ENCODE measurements at regions of chr20 and their contacts with region 1.

Region 1: DNA sequence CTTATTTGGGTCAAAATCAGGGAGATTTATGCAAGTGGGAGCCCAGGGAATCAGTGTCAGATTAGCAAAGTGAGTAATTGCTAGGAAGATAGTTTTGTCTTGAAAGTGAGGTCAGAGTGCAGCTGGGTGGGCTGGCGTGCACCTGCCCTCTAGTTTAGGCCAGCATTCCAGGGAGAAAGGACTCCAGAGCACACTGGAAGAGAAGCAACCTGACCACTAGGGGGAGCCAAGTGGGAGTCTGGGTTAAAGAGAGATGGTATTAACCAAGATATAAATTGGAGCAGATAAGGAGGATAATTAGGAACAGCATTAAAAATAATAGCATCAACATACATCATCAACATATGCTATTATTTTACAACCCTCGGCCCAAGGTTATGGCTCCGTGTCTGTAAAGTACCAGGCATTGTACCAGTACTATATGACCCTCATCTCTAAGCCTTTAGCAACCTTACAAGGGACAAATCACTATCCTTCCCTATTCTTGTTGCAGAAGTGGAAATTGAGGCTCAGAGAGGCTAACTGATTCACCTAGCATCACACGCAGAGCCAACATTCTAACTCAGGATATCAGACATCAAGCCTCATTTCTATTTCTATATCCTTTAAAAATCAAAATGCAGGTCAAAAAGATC is 57.8 kb downstream of the SLC2A10 start:
- DNase-seq: peak; percentile 43
- H3K4me3 ChIP-seq: no peak overlapping the region
- H3K27ac ChIP-seq: no peak overlapping the region
- H3K4me1 ChIP-seq: peaks cover 0 to 12% of the 10 kb centered on the region in 2 experiments; a peak in 2 of 4 replicates
- H3K27me3 ChIP-seq: no peaks in the 10 kb centered on the region
- CTCF ChIP-seq: peak; percentile 69
- EP300 ChIP-seq: no peak
- RAD21 ChIP-seq: peak; percentile 35; the same call in 1 of the 2 replicates

Region 2: DNA sequence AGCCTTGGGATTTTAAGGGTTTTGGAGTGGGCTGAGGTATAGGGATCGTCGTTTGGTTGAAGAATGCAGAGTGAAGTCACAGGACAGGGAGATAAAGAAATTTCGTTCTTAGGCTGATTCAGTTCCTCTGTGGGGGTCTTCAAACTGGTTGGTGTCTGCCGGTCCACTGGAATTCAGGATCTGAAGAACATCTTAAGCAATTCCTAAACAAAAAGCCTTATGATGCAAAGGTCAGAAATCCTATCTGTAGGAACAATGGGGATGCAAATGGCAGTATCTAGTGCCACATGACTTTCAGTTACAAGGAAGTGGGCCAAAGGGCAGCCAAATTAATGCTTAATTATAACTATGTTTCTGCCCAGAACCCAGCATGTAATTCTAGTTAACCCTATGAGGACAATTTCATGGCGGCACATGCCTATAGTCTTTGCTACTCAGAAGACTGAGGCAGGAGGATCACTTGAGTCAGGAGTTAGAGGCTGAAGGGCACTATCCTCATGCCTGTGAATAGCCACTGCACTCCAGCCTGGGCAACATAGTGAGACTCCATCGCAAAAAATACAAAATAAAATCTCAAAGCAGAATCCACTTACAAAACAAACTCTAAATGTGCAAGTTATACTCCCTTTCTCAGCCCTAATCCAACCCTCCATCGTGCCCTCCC is 62.4 kb before region 1 on chr20:
- CTCF ChIA-PET with region 1: no interaction called
- POLR2A ChIA-PET with region 1: no interaction called
- DNase-seq: no peak
- H3K4me3 ChIP-seq: no peak overlapping the region
- H3K27ac ChIP-seq: no peak overlapping the region
- H3K4me1 ChIP-seq: peaks cover 0 to 3% of the 10 kb centered on the region in 2 experiments; a peak in 1 of 4 replicates
- H3K27me3 ChIP-seq: no peaks in the 10 kb centered on the region
- CTCF ChIP-seq: no peak
- EP300 ChIP-seq: no peak
- RAD21 ChIP-seq: no peak

Region 3: DNA sequence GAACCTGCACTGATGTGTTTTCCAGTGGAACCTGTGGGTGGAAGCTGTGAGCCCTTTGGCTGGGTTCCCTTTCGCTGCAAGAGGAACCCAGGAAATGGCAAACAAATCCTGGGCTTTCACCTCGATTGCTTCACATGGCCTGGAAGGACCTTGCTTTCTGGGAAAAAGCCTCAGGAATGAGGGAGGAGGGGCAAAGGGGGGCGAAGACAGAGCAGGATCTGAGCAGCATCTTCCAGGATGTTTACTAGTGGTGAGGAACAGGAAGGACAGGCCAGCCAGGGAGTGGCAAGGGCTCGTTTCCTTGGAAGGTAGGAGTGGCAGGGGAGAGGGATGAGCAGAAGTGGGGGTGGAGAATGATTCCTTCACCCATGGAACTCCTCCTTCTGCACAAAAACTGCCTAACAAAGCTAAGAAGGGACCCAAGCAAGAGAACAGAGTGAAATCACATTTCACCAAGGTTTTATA is 51.9 kb before region 1 on chr20:
- CTCF ChIA-PET with region 1: no interaction called
- POLR2A ChIA-PET with region 1: no interaction called
- DNase-seq: no peak
- H3K4me3 ChIP-seq: no peak overlapping the region
- H3K27ac ChIP-seq: no peak overlapping the region
- H3K4me1 ChIP-seq: peaks cover 0 to 3% of the 10 kb centered on the region in 2 experiments; a peak in 1 of 4 replicates
- H3K27me3 ChIP-seq: no peaks in the 10 kb centered on the region
- CTCF ChIP-seq: no peak
- EP300 ChIP-seq: no peak
- RAD21 ChIP-seq: no peak

Region 4: DNA sequence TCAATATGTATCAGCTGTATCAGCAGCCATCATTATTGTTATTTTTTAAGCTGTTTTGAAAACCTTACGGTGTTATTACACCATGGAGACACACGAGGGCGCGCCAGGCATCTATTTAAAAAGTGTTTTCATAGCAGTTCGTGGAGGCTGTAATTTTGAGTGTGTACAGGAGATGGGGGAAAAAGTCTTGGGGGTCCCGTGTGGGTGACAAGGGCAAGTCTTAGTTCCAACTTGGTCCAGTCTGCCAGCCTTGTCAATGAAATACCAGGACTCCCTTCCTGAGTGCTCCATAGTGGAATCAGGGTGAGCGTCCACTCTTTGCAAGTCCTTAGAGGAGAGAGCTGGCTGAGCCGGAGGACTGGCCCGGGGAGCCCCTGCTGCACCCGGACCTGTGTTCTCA is 14.5 kb before region 1 on chr20:
- CTCF ChIA-PET with region 1: interaction called, 46 read pairs
- POLR2A ChIA-PET with region 1: no interaction called
- DNase-seq: peak; percentile 60
- H3K4me3 ChIP-seq: no peak overlapping the region; a peak in 1 of 4 replicates
- H3K27ac ChIP-seq: no peak overlapping the region
- H3K4me1 ChIP-seq: no peaks in the 10 kb centered on the region
- H3K27me3 ChIP-seq: no peaks in the 10 kb centered on the region
- CTCF ChIP-seq: peak; percentile 85
- EP300 ChIP-seq: no peak
- RAD21 ChIP-seq: peak; percentile 79